Cardiac septum (tissue), 1 donor: ENCODE measurements at regions of chr19 and their contacts with region 1.

Region 1: GRCh38 chr19:44657211-44657921 is 13.7 kb downstream of the PVR start:
- DNase-seq: peak; percentile 83

Region 2: GRCh38 chr19:44570984-44571684 is 86.2 kb before region 1 on chr19:
- intact Hi-C with region 1: loop called (anchors 2 kb)
- DNase-seq: no peak